ENCODE measurements at regions of chr16 and their contacts with region 1.

Region 1: DNA sequence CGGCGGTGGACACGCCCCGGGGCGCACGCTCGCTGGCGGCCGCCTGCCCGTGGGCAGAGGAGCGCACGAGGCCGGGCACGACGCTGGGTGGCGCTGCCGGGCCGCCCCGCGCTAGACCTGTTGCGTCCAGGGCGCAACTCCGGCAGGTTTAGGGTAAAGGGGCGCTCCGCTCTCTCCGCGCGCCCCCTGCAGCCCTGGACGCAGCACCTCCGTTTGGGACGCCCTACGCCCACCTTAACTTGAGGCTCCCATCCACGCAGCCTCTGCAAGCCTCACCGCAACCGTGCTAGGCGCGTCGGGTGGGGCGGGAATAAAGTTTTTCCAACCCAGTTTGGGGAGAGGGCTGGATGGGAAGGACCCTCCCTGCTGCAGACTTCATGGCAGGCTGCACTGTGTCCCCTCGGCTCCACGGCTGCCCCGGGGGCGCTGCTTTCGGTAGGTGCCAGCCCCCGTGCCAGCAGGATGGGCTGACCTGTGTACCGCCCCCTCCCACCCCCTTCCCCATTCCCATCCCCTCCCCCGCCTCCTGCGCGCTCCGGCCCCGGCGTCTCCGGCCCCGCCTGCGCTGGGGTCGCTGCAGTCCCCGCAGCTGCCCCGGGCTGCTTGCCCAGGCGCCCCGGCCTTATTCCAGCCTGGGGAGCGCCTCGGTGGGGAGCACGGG is at the start of gene SYT17:
- DNase-seq: peak; percentile 18 to 21
- ATAC-seq: peak; percentile 51 to 65
- H3K4me3 ChIP-seq: peak within 1 kb of the TSS; percentile 39 to 52 (median 46)
- H3K27ac ChIP-seq: no peak within 1 kb of the TSS
- H3K4me1 ChIP-seq: peaks cover 0 to 13% of the 10 kb centered on the region in 2 donors
- H3K27me3 ChIP-seq: peaks cover 7 to 20% (median 12%) of the 10 kb centered on the region in 3 donors
- CTCF ChIP-seq: peak; percentile 28 to 65 (median 51)
- POLR2A ChIP-seq: no peak
- total RNA-seq, gene SYT17: 0.10 to 0.87 (median 0.18) TPM

Region 2: DNA sequence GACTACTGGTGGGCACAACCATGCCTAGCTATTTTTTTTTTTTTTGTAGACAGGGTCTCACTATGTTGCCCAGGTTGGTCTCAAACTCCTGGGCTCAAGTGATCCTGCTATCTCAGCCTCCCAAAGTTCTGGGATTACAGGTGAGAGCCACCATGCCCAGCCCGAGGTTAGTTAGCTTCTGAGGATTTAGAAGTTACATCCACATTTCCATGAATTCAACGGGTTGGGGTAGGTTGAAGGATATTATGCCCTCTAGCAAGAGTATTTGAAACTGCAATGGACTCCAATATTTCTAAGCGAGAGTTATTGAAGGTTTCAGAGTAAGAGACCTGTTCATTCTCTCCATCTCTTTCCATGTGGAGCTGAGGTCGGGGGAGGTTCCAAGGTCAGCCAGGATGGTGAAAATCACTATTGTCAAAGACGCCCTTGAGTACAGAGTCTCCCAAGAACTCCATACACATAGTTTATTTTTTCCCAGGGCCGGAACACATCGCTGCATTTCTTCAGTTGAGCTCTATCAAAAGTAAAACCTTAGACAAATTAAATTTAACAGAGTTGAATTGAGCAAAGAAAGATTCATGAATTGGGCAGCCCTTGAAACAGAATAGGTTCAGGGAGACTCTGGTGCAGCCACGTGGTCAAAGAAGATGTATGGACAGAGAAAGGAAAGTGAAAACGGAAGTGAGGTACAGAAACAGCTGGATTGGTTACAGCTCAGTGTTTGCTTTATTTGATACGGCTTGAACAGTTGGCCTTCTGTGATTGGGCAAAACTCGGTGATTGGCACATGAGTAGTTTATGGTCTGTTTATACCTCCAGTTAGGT is 73.1 kb before region 1 on chr16:
- in situ Hi-C with region 1: loop called in 3 of 4 experiments (anchors 10 kb)
- intact Hi-C with region 1: no loop called
- DNase-seq: no peak
- ATAC-seq: no peak
- H3K4me3 ChIP-seq: no peak overlapping the region
- H3K27ac ChIP-seq: no peak overlapping the region
- H3K4me1 ChIP-seq: no peaks in the 10 kb centered on the region
- H3K27me3 ChIP-seq: no peaks in the 10 kb centered on the region
- CTCF ChIP-seq: no peak
- POLR2A ChIP-seq: no peak

Region 3: DNA sequence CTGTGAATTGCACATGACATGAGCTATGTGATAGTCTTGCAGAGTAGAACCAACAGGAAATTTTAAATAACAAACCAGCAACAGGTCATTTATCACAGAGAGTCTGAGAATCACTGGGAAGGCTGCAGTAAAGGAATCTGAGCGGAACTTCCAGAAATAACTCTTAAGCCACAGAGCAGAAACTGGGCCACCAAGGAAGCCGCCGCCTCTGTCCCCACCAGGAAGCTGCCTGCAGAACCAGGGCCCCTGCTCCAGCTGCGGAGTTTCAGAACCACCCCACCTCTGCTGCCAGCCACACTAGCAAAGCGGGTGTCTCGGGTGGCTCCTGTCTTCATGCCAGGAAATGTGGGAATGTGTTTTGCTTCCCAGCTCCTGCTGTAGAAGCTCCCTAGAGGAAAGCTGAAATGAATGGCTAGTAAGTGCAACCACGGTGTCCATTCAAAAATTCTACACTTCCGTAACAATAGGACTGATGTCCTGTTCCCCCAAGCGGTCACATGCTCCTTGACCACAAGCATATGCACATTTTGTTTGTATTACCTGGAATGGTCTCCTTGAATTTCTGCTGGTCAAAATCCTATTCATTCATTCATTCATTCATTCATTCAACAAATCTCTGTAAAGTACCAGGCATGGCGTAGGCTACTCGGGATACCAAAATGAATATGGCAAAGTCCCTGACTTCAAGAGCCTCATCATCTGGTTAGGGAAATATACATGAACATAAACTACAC is 61.8 kb before region 1 on chr16:
- in situ Hi-C with region 1: loop called in 1 of 4 experiments (anchors 10 kb)
- intact Hi-C with region 1: no loop called
- DNase-seq: no peak
- ATAC-seq: no peak
- H3K4me3 ChIP-seq: no peak overlapping the region
- H3K27ac ChIP-seq: no peak overlapping the region
- H3K4me1 ChIP-seq: no peaks in the 10 kb centered on the region
- H3K27me3 ChIP-seq: no peaks in the 10 kb centered on the region
- CTCF ChIP-seq: no peak
- POLR2A ChIP-seq: no peak

Region 4: DNA sequence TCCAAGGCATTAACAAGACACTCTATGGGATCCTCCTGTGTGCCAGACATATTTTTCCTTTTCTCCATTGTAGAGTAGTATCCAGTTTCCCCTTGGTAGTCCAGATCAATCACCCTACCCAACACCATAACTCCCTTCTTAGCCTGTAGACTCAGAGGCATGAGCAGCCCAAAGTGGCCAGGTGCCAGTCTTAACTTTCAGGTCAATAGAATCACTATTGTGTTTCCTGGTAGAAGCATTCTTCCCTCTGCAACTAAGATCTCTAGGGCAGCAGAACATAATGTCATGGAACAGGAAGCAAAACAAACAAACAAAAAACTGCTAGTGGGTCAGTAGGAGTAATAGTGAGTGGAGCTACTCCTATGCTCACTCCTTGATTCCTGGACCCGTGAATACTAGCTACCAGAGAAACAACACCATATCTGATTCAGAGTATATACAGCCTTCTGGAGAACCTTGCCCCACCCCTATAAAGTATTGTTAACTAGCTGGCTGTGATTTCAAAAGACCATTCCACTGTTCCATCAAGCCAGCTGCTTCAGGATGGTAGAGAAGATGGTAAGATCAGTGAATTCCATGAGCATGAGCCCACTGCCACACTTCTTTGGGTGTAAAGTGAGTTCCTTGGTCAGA is 106.4 kb after region 1 on chr16:
- in situ Hi-C with region 1: no loop called
- intact Hi-C with region 1: no loop called
- DNase-seq: no peak
- ATAC-seq: no peak
- H3K4me3 ChIP-seq: no peak overlapping the region
- H3K27ac ChIP-seq: no peak overlapping the region
- H3K4me1 ChIP-seq: no peaks in the 10 kb centered on the region
- H3K27me3 ChIP-seq: no peaks in the 10 kb centered on the region
- CTCF ChIP-seq: no peak
- POLR2A ChIP-seq: no peak

Region 5: GRCh38 chr16:19463487-19463886 is 295.6 kb after region 1 on chr16:
- in situ Hi-C with region 1: no loop called
- intact Hi-C with region 1: no loop called
- DNase-seq: no peak
- ATAC-seq: no peak
- H3K4me3 ChIP-seq: no peak overlapping the region
- H3K27ac ChIP-seq: no peak overlapping the region
- H3K4me1 ChIP-seq: no peaks in the 10 kb centered on the region
- H3K27me3 ChIP-seq: no peaks in the 10 kb centered on the region
- CTCF ChIP-seq: no peak
- POLR2A ChIP-seq: no peak